ENCODE measurements at regions of chr16 and their contacts with region 1.

Region 1: GRCh38 chr16:16014329-16015144 is 65.1 kb downstream of the ABCC1 start:
- DNase-seq: peak; percentile 83

Region 2: GRCh38 chr16:14240219-14240843 is 1774.2 kb before region 1 on chr16:
- intact Hi-C with region 1: no loop called
- DNase-seq: no peak

Region 3: DNA sequence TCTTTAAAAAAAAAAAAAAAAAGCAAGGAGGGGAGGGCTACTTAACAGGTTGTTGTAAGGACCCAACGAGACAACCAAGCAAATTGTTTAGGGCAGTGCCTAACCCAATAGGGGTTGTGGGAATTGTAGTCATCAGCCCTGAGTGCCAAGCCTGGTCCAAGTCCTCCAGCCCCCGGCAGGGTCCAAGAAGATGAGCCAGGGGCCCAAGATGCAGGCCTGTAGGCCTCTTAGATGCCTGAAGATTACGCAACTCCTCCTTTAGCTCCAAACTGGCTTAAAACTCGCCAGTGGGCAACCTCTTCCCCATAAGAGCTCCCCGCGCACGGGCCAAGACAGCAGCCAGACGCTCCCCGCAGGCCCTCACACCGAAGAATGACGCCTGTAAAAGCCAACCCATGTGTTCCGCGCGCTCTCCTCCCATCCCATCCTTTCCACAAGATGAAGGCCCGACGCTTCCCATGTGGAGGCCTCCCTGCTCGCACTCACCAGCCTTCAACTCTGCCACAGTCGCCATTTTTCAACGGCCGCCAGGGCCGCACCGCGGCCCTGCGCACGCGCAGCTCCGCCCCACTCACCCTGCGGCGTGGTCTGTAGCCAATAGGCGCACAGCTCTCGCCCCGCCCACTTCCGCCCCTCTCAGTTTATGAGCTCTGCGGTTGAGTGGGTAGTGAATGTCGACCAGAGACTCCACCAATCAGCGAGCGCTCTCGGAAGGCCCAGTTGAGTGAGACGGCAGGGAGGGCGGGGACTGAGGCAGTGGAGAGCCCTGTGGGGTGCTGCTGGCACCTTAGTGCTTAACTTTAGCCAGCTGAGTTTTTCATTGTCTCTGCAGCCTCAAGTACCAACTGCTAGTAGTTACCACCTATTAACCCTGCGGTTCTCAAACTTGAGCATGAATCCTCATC is 126.2 kb before region 1 on chr16 and contains the start of gene CEP20:
- intact Hi-C with region 1: loop called in 1 of 2 experiments (anchors 10 kb)
- DNase-seq: peak; percentile 100
- total RNA-seq, gene CEP20: 25.7 to 25.8 TPM

Region 4: GRCh38 chr16:17184026-17184425 is 1169.5 kb after region 1 on chr16:
- intact Hi-C with region 1: no loop called
- DNase-seq: no peak